Activated CD4-positive, alpha-beta T cell treated with anti-CD3 and anti-CD28 coated beads, Interleukin-2, amount 10 ng/mL, durations not matched to agents 24 days and 14 days (primary cell): ENCODE measurements at regions of chr3 and their contacts with region 1.

Region 1: DNA sequence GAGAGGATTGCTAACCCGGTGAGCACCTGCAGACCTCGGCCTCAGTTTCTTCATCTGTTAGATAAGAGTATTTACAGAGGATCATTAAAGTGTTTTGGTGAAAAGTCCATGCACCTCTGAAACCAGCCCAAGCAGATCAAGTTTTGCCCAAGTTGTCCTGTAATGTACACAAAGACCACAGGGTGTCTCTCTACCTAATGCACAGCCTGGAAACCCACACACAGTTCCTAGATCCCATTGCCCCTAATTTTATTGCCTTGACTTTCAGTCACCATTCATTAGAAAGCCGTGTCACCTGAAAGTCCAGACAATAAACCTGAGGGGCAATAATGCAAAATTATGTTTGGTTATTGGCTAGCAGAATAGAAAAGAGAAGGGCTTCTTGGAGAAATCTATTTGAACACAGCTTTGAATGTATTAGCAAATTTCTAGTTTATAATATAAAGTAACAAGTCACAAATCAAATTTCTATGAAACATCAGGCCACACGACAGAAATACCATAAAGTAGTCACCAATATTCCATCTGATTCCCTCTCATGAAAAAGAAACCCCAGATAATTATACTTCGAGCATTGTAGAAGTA is 161.3 kb upstream of the SLC2A2 start:
- DNase-seq: peak; percentile 73
- H3K4me3 Mint-ChIP-seq: no peak overlapping the region
- H3K27ac Mint-ChIP-seq: no peak overlapping the region
- H3K4me1 Mint-ChIP-seq: peaks cover 52% of the 10 kb centered on the region
- H3K27me3 Mint-ChIP-seq: no peaks in the 10 kb centered on the region

Region 2: DNA sequence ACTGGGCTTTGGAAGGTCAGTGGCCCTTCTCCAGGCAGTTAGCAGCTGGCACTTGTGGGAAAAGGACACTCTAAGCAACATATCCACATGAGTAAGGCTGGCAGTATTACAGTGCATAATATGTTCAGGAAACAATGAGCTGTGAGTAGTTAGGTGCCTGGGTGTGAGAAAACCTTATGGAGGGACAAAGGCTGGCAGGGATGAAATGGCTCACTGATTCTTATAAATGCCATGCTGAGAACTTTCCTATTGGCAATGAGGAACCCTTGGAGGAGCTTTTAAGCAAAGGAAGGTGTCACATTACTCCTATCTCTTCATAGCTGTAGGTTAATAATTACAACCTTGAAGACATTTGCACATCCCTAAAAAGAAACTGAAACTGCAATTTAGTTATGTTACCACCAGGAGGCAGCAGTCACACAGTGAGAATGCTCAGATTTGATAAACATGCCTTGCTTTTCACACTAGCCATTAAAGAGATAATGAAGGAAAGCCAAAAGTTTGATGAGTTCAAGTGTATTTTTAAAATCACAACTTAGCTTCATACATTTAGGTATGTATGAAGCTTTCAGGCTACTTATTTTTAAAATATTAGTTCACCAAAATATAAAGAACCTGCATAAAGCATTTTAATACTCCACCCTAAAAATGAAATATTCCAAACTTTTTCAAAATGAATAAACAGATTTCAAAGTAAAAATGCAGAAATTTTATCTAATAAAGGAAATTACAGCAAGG is 24.6 kb before region 1 on chr3:
- intact Hi-C with region 1: loop called (anchors 2 kb)
- DNase-seq: peak; percentile 70
- H3K4me3 Mint-ChIP-seq: no peak overlapping the region
- H3K27ac Mint-ChIP-seq: no peak overlapping the region
- H3K4me1 Mint-ChIP-seq: peaks cover 18% of the 10 kb centered on the region
- H3K27me3 Mint-ChIP-seq: no peaks in the 10 kb centered on the region

Region 3: DNA sequence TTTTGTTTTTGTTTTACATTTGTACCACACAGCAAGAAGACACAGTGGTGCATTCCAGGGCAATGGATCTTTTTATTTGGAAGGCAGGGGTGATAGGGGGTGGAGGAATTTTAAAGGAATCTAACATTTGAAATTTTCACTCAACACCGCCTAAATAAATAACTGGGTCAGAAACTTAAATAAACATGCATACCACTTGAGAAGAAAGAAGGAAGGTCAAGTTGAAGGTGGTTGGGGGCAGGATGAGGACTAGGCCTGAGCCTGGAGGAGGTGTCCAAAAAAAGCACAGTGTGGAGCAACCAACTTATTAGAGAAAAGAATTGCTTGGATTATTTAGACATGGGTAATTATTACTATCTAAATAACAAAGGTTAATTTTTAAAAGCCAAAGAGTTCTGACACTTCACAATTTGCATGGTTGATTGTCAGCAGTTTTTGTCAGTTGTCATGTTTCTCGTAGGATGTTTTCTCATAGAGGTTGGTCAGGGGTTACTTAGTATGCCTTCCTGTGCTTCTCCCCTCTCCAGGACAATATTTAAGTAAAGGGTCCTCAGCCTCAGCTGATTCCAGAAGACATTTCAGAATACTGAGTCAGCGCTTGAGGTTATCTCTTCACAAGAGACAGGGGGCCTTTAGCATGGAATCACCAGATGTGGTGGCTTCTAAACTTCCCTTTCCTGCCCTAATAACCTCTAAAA is 12.4 kb after region 1 on chr3:
- intact Hi-C with region 1: no loop called
- DNase-seq: no peak
- H3K4me3 Mint-ChIP-seq: no peak overlapping the region
- H3K27ac Mint-ChIP-seq: no peak overlapping the region
- H3K4me1 Mint-ChIP-seq: peaks cover 11% of the 10 kb centered on the region
- H3K27me3 Mint-ChIP-seq: no peaks in the 10 kb centered on the region

Region 4: DNA sequence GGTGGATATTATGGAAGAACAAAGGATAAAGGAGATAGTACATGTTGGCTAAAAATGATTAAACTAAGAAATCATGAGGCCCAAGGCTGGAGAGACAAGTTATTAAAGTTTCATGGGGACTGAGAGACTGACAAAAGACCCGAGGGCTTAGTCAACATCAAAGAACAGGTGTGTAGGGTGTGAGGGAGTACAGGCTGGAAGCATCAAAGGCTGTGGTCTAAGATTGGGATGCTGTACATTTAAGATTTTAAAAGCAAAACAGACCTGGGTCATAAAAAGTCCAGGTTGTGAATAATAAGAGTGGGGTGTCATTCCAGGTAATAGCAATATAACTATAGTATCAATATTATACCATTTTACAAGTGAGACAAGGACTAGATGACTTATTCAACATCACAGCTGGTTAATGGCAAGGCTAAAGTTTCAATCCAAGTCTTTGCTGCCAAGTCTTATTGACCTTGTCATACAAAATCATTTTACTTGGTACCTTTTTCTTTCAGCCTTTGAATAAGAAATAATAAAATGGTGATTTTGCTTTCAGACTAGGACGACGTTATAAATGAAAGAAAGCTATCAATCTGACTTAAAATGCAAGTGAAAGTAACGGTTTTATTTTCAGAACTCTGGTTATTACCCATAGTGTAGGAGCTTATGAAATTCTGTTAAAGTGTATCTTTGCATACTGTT is 60.8 kb after region 1 on chr3:
- intact Hi-C with region 1: loop called (anchors 1 kb)
- DNase-seq: peak; percentile 60
- H3K4me3 Mint-ChIP-seq: no peak overlapping the region
- H3K27ac Mint-ChIP-seq: no peak overlapping the region
- H3K4me1 Mint-ChIP-seq: peaks cover 34% of the 10 kb centered on the region
- H3K27me3 Mint-ChIP-seq: no peaks in the 10 kb centered on the region

Region 5: DNA sequence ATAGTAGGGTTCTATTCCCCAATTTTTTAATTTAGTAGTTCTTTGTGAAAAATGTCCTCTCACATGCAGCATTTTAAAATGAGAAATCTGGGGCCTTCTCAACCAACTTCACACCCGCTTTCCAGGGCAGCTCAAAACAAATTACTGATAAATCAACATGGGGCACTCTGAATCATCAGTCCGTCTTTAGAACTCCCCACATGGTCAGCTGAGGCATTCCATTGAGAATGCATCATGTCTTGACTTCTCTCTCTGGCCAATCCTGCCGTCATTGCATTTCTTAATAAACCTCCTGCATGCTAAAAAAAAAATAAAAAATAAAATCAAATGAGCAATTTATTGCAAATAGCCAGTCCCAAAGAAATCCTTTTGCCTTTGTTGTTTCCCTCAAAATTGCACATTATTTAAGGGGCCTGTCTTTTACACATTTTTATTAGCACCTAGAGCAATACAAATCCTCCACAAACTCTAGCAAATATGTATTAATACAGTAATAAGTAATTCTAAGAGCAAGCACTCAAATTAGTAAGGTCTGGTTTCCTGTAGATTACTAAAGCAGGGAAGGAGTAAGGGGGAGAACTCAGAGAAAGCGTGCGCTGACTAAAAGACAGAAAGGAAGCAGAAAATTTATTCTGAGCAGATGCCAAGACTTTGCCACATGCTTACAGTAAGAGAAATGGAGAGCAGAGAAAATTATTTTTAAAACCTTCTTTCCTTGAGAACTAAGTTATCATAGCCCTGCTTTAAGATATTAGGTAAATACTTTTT is 96.7 kb after region 1 on chr3:
- intact Hi-C with region 1: loop called (anchors 1 kb)
- DNase-seq: no peak
- H3K4me3 Mint-ChIP-seq: peak overlapping the region; percentile 23
- H3K27ac Mint-ChIP-seq: peak overlapping the region; percentile 69
- H3K4me1 Mint-ChIP-seq: peaks cover 44% of the 10 kb centered on the region
- H3K27me3 Mint-ChIP-seq: no peaks in the 10 kb centered on the region

Region 6: DNA sequence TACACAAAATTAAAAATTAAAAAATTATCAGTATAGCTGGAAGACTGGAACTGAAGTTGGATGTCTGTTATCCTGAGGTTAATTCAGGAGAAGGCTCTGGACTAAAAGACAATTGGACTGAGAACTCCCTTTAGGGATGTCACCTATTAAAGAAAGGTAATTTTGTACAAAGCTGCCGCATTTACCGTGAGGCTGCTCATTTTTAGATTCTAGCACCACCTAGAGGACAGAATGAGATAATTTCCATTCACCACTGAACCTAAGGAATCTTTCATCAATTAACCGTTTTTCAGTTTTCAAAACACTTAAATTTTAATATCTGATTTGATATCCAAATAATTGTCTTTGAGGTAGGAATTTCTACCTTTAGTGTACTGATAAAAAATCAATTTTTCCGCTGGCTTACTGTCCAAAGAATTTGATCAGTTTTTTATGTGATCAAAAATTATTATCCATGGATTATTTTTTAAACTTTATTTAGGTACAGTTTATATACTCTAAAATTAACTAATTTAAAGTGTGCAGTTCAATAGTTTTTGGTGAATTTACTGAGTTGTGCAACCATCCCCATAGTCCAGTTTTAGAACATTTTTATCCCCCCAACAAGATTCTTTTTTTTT is 379.1 kb after region 1 on chr3:
- intact Hi-C with region 1: loop called (anchors 2 kb)
- DNase-seq: peak; percentile 75
- H3K4me3 Mint-ChIP-seq: no peak overlapping the region
- H3K27ac Mint-ChIP-seq: no peak overlapping the region
- H3K4me1 Mint-ChIP-seq: peaks cover 18% of the 10 kb centered on the region
- H3K27me3 Mint-ChIP-seq: peaks cover 21% of the 10 kb centered on the region